HEK293 (cell line): ENCODE measurements at regions of chr4 and their contacts with region 1.

Region 1: DNA sequence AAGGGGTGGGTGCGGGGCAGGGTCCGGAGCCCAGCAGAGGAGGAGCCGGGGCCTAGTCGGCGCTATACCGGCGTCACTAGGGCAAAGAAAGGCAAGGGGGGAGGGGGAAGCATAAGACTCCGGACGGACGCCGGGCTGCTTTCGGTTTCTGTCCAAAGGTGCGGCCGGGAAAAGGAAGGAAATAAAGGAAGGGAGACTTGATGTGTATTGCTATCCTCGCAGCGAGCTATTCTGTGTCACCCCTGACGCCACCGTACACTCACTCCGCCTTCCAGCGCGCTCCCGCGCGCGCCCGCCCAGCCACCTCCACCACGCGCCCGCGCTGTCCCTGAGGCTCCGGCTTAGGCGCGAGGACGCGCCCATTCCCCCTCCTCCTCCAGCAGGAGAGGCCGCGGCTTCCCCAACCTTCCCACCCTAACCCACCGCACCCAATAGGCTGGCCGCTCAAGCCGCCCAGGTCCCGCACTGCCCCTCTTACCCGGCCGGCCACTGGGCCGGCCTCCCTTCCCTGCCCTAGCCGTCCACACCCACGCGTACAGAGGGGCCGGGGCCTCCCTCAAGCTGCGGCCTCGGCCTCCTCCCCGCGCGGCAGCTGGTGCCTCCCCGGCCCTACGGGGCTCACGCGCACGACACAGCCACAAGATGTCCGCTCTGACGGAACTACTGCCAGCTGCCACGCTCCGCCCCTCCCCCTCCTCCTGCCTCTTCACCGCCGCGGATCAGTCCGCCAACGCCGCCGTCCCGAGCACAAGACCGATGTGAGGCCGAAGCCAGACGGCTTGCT is at the start of gene UBE2D3:
- H3K4me3 ChIP-seq: peak within 1 kb of the TSS; percentile 94
- H3K27ac ChIP-seq: peak within 1 kb of the TSS; percentile 97
- H3K4me1 ChIP-seq: no peaks in the 10 kb centered on the region
- CTCF ChIP-seq: peak; percentile 37; the same call in 1 of the 2 replicates

Region 2: GRCh38 chr4:102620697-102621497 is 206.2 kb before region 1 on chr4:
- CTCF ChIA-PET with region 1: interaction called, 13 read pairs
- POLR2A ChIA-PET with region 1: interaction called, 7 read pairs
- H3K4me3 ChIP-seq: peak overlapping the region; percentile 9; the same call in 1 of the 2 replicates
- H3K27ac ChIP-seq: no peak overlapping the region
- H3K4me1 ChIP-seq: no peaks in the 10 kb centered on the region
- CTCF ChIP-seq: peak; percentile 69; the same call in 1 of the 2 replicates

Region 3: GRCh38 chr4:102760645-102761295 is 66.3 kb before region 1 on chr4 and contains the start of gene MANBA:
- CTCF ChIA-PET with region 1: no interaction called
- POLR2A ChIA-PET with region 1: interaction called, 17 read pairs
- H3K4me3 ChIP-seq: peak within 1 kb of the TSS; percentile 79
- H3K27ac ChIP-seq: peak within 1 kb of the TSS; percentile 42; the same call in 1 of the 2 replicates
- H3K4me1 ChIP-seq: no peaks in the 10 kb centered on the region; the same call in 1 of the 2 replicates
- CTCF ChIP-seq: peak; percentile 73

Region 4: DNA sequence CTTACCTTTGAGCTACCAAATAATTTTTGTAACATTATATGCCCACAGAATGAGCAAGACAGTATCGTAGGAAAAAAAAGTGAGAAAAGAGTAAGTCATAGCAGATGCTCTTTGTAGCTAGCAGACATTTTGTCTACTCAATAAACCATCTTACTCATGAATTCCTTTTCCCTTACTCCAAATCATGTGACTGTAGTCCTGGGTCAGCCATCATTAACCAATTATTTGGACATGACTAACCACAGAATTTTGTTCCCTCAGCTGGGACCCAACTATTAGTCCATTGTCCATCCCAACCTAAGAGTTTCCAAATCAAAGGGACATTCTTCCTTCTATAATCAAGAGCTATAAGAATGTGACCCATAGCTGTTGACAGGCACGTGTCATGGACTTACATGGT is 11.1 kb before region 1 on chr4:
- CTCF ChIA-PET with region 1: no interaction called
- POLR2A ChIA-PET with region 1: interaction called, 22 read pairs
- H3K4me3 ChIP-seq: no peak overlapping the region
- H3K27ac ChIP-seq: no peak overlapping the region
- H3K4me1 ChIP-seq: peaks cover 12% of the 10 kb centered on the region
- CTCF ChIP-seq: no peak

Region 5: GRCh38 chr4:102868781-102869568 is 41.9 kb after region 1 on chr4 and contains the start of gene CISD2:
- CTCF ChIA-PET with region 1: no interaction called
- POLR2A ChIA-PET with region 1: interaction called, 61 read pairs
- H3K4me3 ChIP-seq: peak within 1 kb of the TSS; percentile 79
- H3K27ac ChIP-seq: peak within 1 kb of the TSS; percentile 84
- H3K4me1 ChIP-seq: no peaks in the 10 kb centered on the region
- CTCF ChIP-seq: no peak

Region 6: GRCh38 chr4:103008875-103009729 is 182.0 kb after region 1 on chr4:
- CTCF ChIA-PET with region 1: no interaction called
- POLR2A ChIA-PET with region 1: interaction called, 12 read pairs
- H3K4me3 ChIP-seq: no peak overlapping the region
- H3K27ac ChIP-seq: no peak overlapping the region
- H3K4me1 ChIP-seq: peaks cover 6% of the 10 kb centered on the region; the same call in 1 of the 2 replicates
- CTCF ChIP-seq: peak; percentile 54; the same call in 1 of the 2 replicates

Region 7: DNA sequence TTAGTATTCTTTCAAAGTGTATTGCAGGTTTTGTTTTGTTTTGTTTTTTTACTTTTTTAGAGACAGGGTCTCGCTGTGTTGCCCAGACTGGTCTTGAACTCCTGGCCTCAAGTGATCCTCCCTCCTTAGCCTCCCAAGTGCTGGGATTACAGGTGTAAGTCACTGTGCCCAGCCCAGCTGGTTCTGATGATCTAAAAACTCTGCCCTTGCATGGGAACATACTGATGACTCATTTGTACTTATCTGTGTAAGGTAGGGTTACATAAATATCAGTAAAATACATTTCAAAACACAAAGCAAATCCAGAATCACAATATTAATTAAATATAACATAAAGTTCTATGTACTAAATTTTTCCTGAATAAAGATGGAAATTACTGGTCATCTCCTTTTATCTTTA is 199.8 kb after region 1 on chr4:
- CTCF ChIA-PET with region 1: no interaction called
- POLR2A ChIA-PET with region 1: no interaction called
- H3K4me3 ChIP-seq: no peak overlapping the region
- H3K27ac ChIP-seq: no peak overlapping the region
- H3K4me1 ChIP-seq: no peaks in the 10 kb centered on the region
- CTCF ChIP-seq: no peak